ENCODE measurements at regions of chr7 and their contacts with region 1.

Region 1: GRCh38 chr7:103573479-103574058 is 127.6 kb upstream of the SLC26A5 start:
- H3K4me3 Mint-ChIP-seq: no peak overlapping the region
- H3K27ac Mint-ChIP-seq: no peak overlapping the region
- H3K4me1 Mint-ChIP-seq: no peaks in the 10 kb centered on the region
- H3K27me3 Mint-ChIP-seq: peaks cover 2% of the 10 kb centered on the region

Region 2: DNA sequence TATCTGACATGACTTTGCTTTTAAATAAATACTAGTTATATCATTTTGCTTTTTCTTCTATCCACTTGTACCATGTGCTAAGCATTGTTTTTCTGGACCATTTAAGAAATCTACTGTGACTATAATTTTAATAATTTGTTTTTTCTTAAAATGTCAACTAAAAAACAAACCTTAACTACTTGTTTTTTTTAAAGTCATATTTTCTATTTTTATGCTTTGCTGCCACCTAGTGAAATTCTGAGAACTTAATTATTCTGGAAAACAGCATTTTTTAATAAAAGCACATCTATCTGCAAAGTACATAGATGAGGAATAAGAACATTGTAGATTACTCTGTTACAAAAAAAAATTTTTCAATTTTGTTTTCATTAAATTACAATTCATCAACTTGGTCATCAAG is 586.8 kb after region 1 on chr7:
- intact Hi-C with region 1: loop called (anchors 1 kb)
- H3K4me3 Mint-ChIP-seq: no peak overlapping the region
- H3K27ac Mint-ChIP-seq: no peak overlapping the region
- H3K4me1 Mint-ChIP-seq: no peaks in the 10 kb centered on the region
- H3K27me3 Mint-ChIP-seq: no peaks in the 10 kb centered on the region

Region 3: DNA sequence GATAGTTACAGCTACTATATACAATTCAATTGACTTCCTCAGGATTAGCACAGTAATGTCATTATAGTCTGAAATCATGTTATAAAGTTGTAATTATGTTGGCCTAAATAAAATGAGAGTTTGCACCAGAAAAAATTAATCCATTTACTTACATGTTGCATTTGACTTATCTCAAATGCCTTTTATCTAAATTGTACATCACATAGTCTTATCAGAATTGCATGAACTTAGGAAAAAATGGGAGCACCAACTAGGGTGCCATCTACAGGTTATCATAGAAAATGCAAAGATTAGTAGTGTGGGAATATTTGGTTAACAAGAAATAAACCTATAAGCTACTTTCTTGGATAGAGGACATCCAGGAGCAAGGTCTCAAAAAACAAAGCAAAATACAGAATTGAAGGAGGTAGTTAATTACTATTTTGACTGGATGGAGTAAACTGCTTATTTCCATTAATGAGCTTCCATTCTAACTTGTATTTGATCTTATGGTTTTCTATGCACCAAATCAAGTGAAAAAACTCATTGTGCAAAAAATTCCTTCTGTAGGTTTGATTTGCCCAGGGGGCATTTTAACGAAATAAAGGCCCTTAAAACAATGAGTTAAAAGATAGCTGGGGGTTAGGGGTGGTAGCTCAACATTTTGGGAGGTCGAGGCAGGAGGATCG is 694.3 kb after region 1 on chr7:
- intact Hi-C with region 1: loop called (anchors 10 kb)
- H3K4me3 Mint-ChIP-seq: no peak overlapping the region
- H3K27ac Mint-ChIP-seq: no peak overlapping the region
- H3K4me1 Mint-ChIP-seq: no peaks in the 10 kb centered on the region
- H3K27me3 Mint-ChIP-seq: peaks cover 8% of the 10 kb centered on the region